GM10248 (cell line): ENCODE measurements at regions of chr11 and their contacts with region 1.

Region 1: GRCh38 chr11:12281571-12282478 is 95.5 kb upstream of the PARVA start:
- DNase-seq: peak; percentile 82
- CTCF ChIP-seq: peak; percentile 98

Region 2: DNA sequence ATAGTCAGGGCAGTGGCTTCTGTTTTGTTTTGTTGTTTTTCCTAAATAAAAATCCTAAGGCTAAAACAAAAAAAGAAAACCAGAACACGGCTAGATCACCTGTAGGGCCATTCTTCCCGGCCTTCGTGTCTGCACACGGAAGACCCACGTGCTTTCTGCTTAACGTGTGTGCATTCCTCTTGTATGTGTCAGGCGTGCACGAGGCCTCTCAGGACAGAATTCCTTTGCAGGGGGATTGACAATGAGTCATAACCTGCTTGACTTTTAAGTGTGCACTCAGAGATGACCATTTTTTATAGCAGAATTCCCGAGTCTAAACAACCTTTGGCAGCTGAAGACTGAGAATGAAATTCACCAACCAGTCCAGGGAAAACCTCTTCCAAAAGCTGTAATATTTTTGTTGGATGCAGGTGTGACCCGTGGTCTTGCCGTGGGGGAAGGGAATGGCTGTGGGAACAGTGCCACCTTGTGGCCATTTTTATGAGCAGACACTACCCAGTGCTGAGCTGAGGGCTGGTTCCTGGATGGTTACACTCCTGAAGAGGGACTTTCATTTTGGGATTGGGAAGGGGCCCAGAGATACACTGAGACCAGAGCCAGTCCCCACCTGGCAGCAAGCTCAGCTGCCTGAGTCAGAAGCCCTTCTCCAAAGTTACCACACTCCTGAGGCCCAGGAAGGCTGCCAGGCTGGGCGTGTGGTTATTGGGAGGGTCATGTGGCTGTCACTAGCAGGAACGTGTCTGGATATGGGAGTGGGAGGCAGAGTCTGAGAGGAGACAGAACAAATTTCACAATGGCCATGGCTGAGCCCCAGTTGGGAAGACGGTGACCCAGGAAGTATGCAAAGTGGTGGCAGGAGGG is 237.6 kb before region 1 on chr11:
- CTCF ChIA-PET with region 1: interaction called, 578 read pairs
- POLR2A ChIA-PET with region 1: no interaction called
- DNase-seq: peak; percentile 68
- CTCF ChIP-seq: peak; percentile 90

Region 3: DNA sequence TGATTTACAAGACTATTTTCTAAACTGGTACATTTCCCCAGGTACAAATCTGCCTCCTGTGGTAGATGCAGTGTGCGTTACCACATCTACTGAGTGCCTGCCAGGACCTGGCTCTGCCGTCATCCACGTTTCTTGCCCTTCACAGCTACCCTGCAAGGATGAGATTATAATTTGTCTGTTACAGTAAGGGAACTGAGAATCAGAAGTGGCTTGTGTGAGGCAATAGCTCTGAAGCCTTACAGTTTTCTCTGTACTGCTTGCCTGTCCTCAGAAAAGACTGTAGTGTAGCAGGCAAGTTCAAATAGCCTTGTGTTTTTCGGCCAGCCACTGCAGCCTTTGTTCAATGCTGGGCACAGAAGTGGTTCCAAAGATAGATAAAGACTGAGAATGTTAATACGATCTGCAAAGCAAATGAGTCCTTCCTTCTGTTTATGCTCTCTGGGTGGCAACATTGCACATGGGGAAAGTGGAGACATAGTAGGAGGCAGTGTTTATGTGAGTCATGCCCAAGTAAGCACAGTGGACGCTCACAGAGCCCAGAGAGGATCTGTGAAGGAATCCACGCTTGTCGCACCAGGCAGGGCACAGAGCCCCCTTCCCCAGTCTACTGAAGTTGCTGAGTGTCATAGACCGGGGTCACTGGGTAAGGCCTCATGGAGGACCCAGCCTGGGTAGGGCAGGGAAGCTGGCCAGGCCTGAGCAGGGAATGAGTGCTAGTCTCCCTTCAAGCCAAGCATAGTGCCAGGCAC is 122.3 kb before region 1 on chr11:
- CTCF ChIA-PET with region 1: interaction called, 13 read pairs
- POLR2A ChIA-PET with region 1: no interaction called
- DNase-seq: no peak
- CTCF ChIP-seq: no peak

Region 4: DNA sequence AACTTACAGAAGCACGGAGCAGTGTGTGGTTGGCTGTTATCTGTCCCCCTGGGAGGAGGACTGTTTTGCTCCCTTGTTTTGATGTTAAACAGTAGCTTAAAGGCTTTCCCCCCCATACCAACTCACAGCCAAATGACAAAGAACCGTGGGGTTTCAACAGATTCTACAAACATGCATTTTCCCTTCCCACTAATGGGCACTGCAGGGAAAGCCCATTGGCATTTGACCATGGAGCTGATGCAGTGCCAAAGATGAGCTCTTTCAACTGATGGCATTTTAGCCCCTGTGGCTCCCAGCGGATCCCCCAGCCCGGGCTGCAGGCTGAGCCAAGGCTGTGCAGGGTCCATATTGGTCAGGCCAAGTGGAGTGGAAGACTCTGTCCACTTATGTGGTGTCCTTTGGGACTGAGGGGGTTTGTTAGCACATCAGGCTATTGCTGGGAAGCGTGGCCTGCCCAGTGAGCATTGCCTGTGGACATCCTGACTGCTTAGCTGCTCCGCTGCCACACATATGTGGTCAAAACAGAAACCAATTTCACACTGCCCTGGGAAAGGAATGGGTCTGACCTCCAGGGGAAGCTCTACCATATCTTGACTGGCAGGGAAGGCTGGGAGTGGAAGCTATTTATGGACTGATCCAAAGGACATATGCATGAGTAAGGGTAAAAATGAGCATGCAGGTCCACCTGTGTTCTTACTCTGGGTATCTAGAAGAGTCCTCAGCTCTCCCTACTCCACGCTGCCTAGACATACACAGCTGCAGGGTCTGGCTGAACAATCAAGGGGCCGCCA is 20.9 kb before region 1 on chr11:
- CTCF ChIA-PET with region 1: interaction called, 10 read pairs
- POLR2A ChIA-PET with region 1: no interaction called
- DNase-seq: no peak
- CTCF ChIP-seq: no peak

Region 5: GRCh38 chr11:12269104-12269441 is 12.8 kb before region 1 on chr11:
- CTCF ChIA-PET with region 1: interaction called, 20 read pairs
- POLR2A ChIA-PET with region 1: no interaction called
- DNase-seq: no peak
- CTCF ChIP-seq: no peak

Region 6: GRCh38 chr11:12377824-12378593 is 96.2 kb after region 1 on chr11:
- CTCF ChIA-PET with region 1: no interaction called
- POLR2A ChIA-PET with region 1: no interaction called
- DNase-seq: no peak
- CTCF ChIP-seq: no peak